Heart left ventricle (tissue), 16 donors: ENCODE measurements at regions of chr13 and their contacts with region 1.

Region 1: DNA sequence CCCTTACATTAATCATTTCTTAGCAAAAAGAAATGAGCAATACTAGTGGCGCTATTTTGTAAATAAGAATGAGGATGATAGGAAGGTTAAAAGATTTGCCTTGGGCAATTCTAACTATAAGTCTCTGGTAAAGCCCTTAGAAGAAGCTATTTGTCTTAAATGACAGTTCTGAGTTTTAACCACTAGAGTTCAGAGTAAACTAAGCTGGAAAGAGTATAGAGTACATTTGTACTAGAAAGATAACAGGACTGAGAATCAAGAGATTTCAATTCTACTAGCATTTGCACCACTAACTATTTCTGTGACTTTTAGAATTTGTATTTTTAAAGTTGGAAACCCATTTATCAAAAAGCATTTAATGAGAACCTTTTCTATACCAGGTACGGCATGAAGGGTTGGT is 750.3 kb downstream of the OLFM4 start:
- DNase-seq: no peak
- ATAC-seq: no peak
- H3K4me3 ChIP-seq: no peak overlapping the region
- H3K27ac ChIP-seq: no peak overlapping the region
- H3K4me1 ChIP-seq: peaks cover 0 to 3% (median 0%) of the 10 kb centered on the region in 12 donors
- H3K27me3 ChIP-seq: peaks cover 0 to 12% (median 0%) of the 10 kb centered on the region in 9 donors
- CTCF ChIP-seq: no peak
- POLR2A ChIP-seq: no peak

Region 2: DNA sequence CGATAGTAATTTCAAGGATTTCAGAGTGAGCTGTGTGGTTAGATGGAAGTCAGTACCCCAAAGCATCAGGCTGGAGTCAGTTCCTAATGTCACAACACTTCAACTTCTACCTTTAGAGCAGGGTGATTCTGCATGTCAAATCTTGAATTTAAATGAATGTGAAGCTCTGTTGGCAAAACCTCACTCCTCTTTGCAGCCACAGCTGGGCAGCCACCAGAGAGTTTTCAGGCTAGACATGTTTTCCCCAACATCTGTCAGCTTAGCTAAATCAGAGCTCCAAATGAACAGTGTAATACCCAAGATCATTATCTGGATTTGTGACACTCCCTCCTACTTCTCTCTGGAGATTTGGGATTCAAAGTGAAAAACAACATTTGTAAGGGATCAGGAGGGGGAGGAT is 784.1 kb before region 1 on chr13:
- intact Hi-C with region 1: no loop called
- DNase-seq: no peak
- ATAC-seq: no peak
- H3K4me3 ChIP-seq: no peak overlapping the region
- H3K27ac ChIP-seq: no peak overlapping the region
- H3K4me1 ChIP-seq: no peaks in the 10 kb centered on the region
- H3K27me3 ChIP-seq: peaks cover 0 to 3% (median 0%) of the 10 kb centered on the region in 9 donors
- CTCF ChIP-seq: no peak
- POLR2A ChIP-seq: no peak

Region 3: GRCh38 chr13:53311561-53311960 is 467.4 kb before region 1 on chr13:
- intact Hi-C with region 1: loop called in 1 of 10 experiments (anchors 10 kb)
- DNase-seq: no peak
- ATAC-seq: no peak
- H3K4me3 ChIP-seq: no peak overlapping the region
- H3K27ac ChIP-seq: no peak overlapping the region
- H3K4me1 ChIP-seq: no peaks in the 10 kb centered on the region
- H3K27me3 ChIP-seq: no peaks in the 10 kb centered on the region
- CTCF ChIP-seq: no peak
- POLR2A ChIP-seq: no peak

Region 4: DNA sequence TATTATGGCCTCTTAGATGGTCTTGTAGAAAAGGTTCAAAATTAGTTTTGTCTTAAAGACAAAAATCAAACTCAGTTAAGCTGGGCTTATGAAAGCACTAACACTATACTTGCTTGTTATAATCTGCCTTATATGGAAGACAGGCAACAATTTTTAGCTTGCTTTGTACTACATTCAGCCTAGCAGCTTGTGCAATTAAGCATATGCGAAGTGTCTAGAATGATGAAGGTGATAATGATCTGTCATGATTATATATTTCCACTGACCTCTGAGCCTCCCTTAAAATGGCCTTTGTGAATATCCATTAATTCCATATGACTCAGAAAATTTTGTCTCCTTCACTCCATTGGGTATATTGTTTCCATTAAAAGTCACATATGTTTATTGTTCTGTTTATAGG is 84.6 kb after region 1 on chr13:
- intact Hi-C with region 1: no loop called
- DNase-seq: no peak
- ATAC-seq: no peak
- H3K4me3 ChIP-seq: no peak overlapping the region
- H3K27ac ChIP-seq: no peak overlapping the region
- H3K4me1 ChIP-seq: no peaks in the 10 kb centered on the region
- H3K27me3 ChIP-seq: no peaks in the 10 kb centered on the region
- CTCF ChIP-seq: no peak
- POLR2A ChIP-seq: no peak